GM13976 (cell line): ENCODE measurements at regions of chr1 and their contacts with region 1.

Region 1: GRCh38 chr1:83574791-83575190 is 424.1 kb downstream of the TTLL7 start:
- DNase-seq: no peak
- CTCF ChIP-seq: no peak

Region 2: GRCh38 chr1:83516369-83516768 is 58.4 kb before region 1 on chr1:
- in situ Hi-C with region 1: loop called (anchors 10 kb)
- DNase-seq: no peak
- CTCF ChIP-seq: no peak

Region 3: GRCh38 chr1:83641206-83641658 is 66.4 kb after region 1 on chr1:
- in situ Hi-C with region 1: no loop called
- DNase-seq: no peak
- CTCF ChIP-seq: no peak